Sigmoid colon (tissue), 7 donors: ENCODE measurements at regions of chr6 and their contacts with region 1.

Region 1: GRCh38 chr6:10954590-10955010 is 67.7 kb downstream of the SYCP2L start:
- DNase-seq: no peak
- H3K4me3 ChIP-seq: no peak overlapping the region
- H3K27ac ChIP-seq: no peak overlapping the region
- H3K4me1 ChIP-seq: no peaks in the 10 kb centered on the region
- H3K27me3 ChIP-seq: no peaks in the 10 kb centered on the region
- CTCF ChIP-seq: peak in 2 of 4 experiments; percentile 8 to 27
- EP300 ChIP-seq: no peak
- POLR2A ChIP-seq: no peak

Region 2: GRCh38 chr6:11064836-11065235 is 110.2 kb after region 1 on chr6:
- intact Hi-C with region 1: loop called (anchors 10 kb)
- DNase-seq: no peak
- H3K4me3 ChIP-seq: no peak overlapping the region
- H3K27ac ChIP-seq: no peak overlapping the region
- H3K4me1 ChIP-seq: no peaks in the 10 kb centered on the region
- H3K27me3 ChIP-seq: no peaks in the 10 kb centered on the region
- CTCF ChIP-seq: no peak
- EP300 ChIP-seq: no peak
- POLR2A ChIP-seq: no peak